ENCODE measurements at regions of chr6 and their contacts with region 1.

Region 1: GRCh38 chr6:53794720-53795253 is at the start of gene LRRC1:
- DNase-seq: peak; percentile 90 to 91
- ATAC-seq: peak; percentile 76 to 93 (median 84)
- H3K4me3 ChIP-seq: peak within 1 kb of the TSS; percentile 79
- H3K27ac ChIP-seq: no peak within 1 kb of the TSS
- H3K4me1 ChIP-seq: peaks cover 4% of the 10 kb centered on the region
- H3K27me3 ChIP-seq: peaks cover 3 to 50% (median 5%) of the 10 kb centered on the region in 3 donors
- CTCF ChIP-seq: no peak
- total RNA-seq, gene LRRC1: 0.42 to 1.1 (median 0.73) TPM

Region 2: DNA sequence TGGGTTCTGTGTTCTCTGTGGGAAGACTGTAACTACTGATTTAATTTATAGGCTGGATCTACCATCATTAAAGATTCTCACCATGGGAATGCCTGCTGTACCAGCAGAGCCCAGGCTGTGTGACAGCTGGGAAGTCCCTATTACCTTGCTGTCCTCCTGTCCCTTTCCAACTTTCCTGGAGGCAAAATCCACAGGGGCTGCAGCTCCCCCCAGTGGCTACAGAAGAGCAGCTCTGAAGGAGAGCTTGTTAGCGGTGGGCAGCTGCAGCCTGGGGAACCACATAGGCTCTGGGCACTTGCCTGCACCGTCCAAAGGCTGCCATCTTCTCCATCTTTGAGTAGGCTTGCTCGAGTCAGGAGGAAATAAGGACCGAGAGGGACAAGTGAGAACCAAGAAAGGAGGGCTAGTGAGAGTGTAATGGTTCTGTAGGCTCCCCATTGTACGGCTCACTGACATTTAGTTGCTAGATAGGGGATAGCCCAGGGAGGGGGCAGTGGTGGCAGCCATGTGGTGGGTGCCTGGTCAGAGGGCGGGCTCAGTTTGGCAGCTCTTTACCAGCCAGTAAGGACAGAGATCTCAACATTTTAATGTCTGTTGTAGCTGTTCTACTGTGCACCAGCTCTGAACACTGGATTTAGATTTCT is 161.4 kb after region 1 on chr6:
- intact Hi-C with region 1: loop called in 1 of 2 experiments (anchors 5 kb)
- DNase-seq: peak; percentile 36 to 49
- ATAC-seq: peak in 3 of 4 donors; percentile 33 to 68 (median 55)
- H3K4me3 ChIP-seq: no peak overlapping the region
- H3K27ac ChIP-seq: no peak overlapping the region
- H3K4me1 ChIP-seq: no peaks in the 10 kb centered on the region
- H3K27me3 ChIP-seq: no peaks in the 10 kb centered on the region
- CTCF ChIP-seq: peak; percentile 54

Measured in psoas muscle (tissue), 8 donors.